ENCODE measurements at regions of chr2 and their contacts with region 1.

Region 1: DNA sequence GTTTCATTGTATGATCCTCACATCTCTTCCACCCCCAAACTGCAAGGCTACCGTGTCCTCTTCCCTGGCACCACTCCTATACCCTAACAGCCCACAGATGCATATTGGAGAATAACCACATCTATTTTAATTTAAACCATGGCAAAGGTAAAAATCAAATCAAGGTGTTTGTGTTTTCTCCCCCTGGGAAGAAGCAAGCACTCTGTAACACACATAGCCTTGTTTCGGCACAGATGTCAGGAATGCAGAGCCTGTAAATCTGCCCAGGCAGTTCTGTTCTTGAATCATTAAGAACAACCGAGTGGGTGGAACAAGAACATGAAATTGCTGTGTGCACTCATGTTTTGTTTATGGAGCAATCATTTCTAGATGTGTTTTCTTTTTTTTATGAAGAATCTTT is 6.8 kb upstream of the COX7A2L start:
- DNase-seq: no peak
- ATAC-seq: no peak
- H3K4me3 ChIP-seq: no peak overlapping the region
- H3K27ac ChIP-seq: no peak overlapping the region
- H3K4me1 ChIP-seq: peaks cover 14% of the 10 kb centered on the region
- H3K27me3 ChIP-seq: no peaks in the 10 kb centered on the region
- CTCF ChIP-seq: no peak

Region 2: DNA sequence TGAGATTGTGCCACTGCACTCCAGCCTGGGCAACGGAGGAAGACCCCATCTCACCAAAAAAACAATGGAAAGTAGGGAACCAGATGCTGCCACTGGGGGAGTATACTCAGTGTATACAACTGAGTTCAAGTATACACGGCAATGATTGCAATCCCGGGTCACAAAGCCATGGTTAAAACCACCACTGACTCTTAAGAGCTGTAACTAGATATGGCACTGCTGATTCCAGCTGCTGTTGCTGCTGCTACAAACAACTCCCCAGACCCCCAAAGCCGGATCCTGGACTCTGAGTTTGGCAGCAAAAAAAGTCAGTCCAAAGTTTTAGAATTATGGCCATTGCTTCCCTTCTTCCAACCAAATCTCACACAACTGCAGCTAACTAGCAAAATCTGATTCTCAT is 36.8 kb after region 1 on chr2:
- CTCF ChIA-PET with region 1: no interaction called
- POLR2A ChIA-PET with region 1: interaction called, 13 read pairs
- intact Hi-C with region 1: no loop called
- DNase-seq: no peak
- ATAC-seq: no peak
- H3K4me3 ChIP-seq: no peak overlapping the region
- H3K27ac ChIP-seq: no peak overlapping the region
- H3K4me1 ChIP-seq: no peaks in the 10 kb centered on the region
- H3K27me3 ChIP-seq: no peaks in the 10 kb centered on the region
- CTCF ChIP-seq: no peak

Region 3: GRCh38 chr2:42424033-42424432 is 56.2 kb after region 1 on chr2:
- CTCF ChIA-PET with region 1: no interaction called
- POLR2A ChIA-PET with region 1: no interaction called
- intact Hi-C with region 1: loop called (anchors 5 kb)
- DNase-seq: no peak
- ATAC-seq: no peak
- H3K4me3 ChIP-seq: no peak overlapping the region
- H3K27ac ChIP-seq: no peak overlapping the region
- H3K4me1 ChIP-seq: peaks cover 22% of the 10 kb centered on the region
- H3K27me3 ChIP-seq: no peaks in the 10 kb centered on the region
- CTCF ChIP-seq: no peak

Measured in PC-3 (cell line).